Heart right ventricle (tissue), 16 donors: ENCODE measurements at regions of chr7 and their contacts with region 1.

Region 1: GRCh38 chr7:99408379-99409191 is at the starts of genes BUD31 and PDAP1:
- DNase-seq: peak; percentile 93
- ATAC-seq: peak; percentile 93 to 97 (median 96)
- H3K4me3 ChIP-seq: peak within 1 kb of the TSS; percentile 72 to 100 (median 90)
- H3K27ac ChIP-seq: peak within 1 kb of the TSS; percentile 96 to 99 (median 97)
- H3K4me1 ChIP-seq: peaks cover 17 to 55% (median 41%) of the 10 kb centered on the region in 9 donors
- H3K27me3 ChIP-seq: no peaks in the 10 kb centered on the region
- CTCF ChIP-seq: peak in 2 of 9 donors; percentile 5 to 29
- total RNA-seq, gene BUD31: 28.3 to 59.7 (median 40.9) TPM
- total RNA-seq, gene PDAP1: 89.7 to 130 (median 97.6) TPM

Region 2: GRCh38 chr7:99040104-99040958 is 368.3 kb before region 1 on chr7:
- intact Hi-C with region 1: loop called in 1 of 10 experiments (anchors 10 kb)
- DNase-seq: peak; percentile 64 to 91
- ATAC-seq: peak; percentile 76 to 91 (median 85)
- H3K4me3 ChIP-seq: no peak overlapping the region
- H3K27ac ChIP-seq: peak overlapping the region in 6 of 10 donors; percentile 27 to 67 (median 49)
- H3K4me1 ChIP-seq: peaks cover 0 to 42% (median 9%) of the 10 kb centered on the region in 9 donors
- H3K27me3 ChIP-seq: no peaks in the 10 kb centered on the region
- CTCF ChIP-seq: peak; percentile 61 to 85 (median 77)

Region 3: GRCh38 chr7:99312316-99313203 is 96.0 kb before region 1 on chr7:
- intact Hi-C with region 1: no loop called
- DNase-seq: peak; percentile 58 to 62
- ATAC-seq: peak in 7 of 8 donors; percentile 43 to 88 (median 74)
- H3K4me3 ChIP-seq: peak overlapping the region in 1 of 10 donors; percentile 19
- H3K27ac ChIP-seq: no peak overlapping the region
- H3K4me1 ChIP-seq: peaks cover 0 to 9% (median 2%) of the 10 kb centered on the region in 9 donors
- H3K27me3 ChIP-seq: no peaks in the 10 kb centered on the region
- CTCF ChIP-seq: peak; percentile 85 to 92 (median 90)

Region 4: DNA sequence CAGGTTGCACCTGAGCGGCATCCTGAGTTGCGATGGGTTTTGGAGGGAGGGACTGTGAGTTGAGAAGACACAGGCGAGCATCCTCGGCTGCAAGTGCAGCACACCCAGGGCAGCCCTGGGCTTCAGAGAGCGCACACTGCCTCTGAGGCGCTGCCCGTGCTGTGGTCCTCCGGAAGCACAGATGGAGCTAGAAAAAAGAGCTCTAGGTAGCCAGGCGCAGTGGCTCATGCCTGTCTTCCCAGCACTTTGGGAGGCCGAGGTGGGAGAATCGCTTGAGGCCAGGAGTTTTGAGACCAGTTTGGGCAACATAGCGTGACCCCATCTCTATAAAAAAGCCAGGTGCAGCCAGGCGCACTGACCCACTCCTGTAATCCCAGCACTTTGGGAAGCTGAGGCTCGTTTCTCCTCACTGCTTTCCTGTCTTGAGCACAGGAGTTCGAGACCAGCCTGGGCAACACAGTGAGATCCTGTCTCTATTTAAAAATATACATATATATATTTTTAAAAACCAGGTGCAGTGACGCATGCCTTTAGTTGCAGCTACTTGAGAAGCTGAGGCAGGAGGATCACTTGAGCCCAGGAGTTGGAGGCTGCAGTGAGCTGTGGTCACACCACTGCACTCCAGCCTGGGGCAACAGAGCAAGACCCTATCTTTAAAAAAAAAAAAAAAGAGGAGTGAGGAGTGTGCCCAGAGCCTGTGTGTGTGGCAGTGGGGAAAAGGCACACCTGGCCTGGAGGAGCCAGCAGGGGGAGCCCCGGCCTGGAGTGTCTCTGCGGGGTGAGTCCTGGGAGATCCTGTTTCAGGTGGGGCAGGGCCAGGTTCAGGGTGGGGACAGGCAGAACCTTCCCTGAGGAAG is 43.4 kb before region 1 on chr7:
- intact Hi-C with region 1: loop called in 4 of 10 experiments (anchors 5 to 10 kb)
- DNase-seq: peak in 1 of 2 donors; percentile 54
- ATAC-seq: peak in 7 of 8 donors; percentile 37 to 71 (median 62)
- H3K4me3 ChIP-seq: no peak overlapping the region
- H3K27ac ChIP-seq: no peak overlapping the region
- H3K4me1 ChIP-seq: no peaks in the 10 kb centered on the region
- H3K27me3 ChIP-seq: no peaks in the 10 kb centered on the region
- CTCF ChIP-seq: peak; percentile 18 to 65 (median 53)

Region 5: DNA sequence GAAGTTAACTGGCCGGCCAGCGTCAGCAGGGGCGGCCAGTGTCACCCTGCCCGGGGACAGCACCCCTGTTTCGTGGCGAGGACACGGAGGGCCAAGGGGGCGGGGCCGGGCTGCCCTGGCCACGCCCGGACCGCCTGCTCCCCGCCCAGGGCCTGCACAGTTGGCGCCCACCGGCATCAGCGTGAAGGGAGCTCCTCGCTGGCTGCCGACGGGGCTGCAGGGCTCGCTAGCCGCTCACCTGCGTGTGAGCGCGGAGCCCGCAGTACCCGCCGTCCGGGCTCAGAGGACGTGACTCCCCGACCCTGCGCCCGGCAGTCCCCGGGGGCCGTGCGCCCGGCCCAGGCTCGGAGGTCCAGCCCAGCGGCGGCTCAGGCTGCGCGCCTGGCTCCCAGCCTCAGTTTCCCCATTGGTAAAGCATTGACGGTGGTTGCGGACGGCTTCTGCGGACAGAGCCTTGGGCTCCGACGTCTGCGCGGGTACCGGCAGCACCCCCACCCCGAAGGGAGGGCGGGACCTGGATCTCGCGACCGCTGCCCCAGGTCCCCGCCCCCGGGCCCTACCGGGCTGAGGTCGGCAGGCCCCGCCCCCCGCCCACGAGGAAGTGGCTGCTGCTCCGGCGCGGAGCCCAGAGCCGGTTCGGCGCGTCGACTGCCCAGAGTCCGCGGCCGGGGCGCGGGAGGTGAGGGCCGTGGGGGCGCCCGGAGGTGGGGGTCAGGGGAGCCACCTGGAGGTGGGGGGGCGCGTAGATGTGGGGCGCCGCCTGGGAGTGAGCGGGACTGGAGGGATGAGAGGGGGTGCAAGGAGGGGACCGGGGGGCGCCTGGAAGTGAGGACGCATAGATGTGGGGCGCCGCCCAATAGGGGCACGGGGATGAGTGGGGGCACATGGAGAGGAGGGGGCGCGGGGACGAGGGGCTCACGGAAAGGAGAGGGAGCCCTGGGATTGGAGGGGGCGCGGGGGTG is 34.2 kb before region 1 on chr7 and contains the start of gene ARPC1B:
- intact Hi-C with region 1: loop called in 6 of 10 experiments (anchors 1 to 10 kb)
- DNase-seq: peak; percentile 83 to 84
- ATAC-seq: peak; percentile 59 to 86 (median 78)
- H3K4me3 ChIP-seq: peak within 1 kb of the TSS; percentile 75 to 97 (median 90)
- H3K27ac ChIP-seq: peak within 1 kb of the TSS; percentile 91 to 98 (median 97)
- H3K4me1 ChIP-seq: peaks cover 0 to 57% (median 34%) of the 10 kb centered on the region in 9 donors
- H3K27me3 ChIP-seq: no peaks in the 10 kb centered on the region
- CTCF ChIP-seq: no peak
- total RNA-seq, gene ARPC1B: 16.2 to 92.0 (median 19.0) TPM

Region 6: GRCh38 chr7:99525713-99526440 is 117.3 kb after region 1 on chr7:
- intact Hi-C with region 1: no loop called
- DNase-seq: no peak
- ATAC-seq: no peak
- H3K4me3 ChIP-seq: no peak overlapping the region
- H3K27ac ChIP-seq: no peak overlapping the region
- H3K4me1 ChIP-seq: no peaks in the 10 kb centered on the region
- H3K27me3 ChIP-seq: no peaks in the 10 kb centered on the region
- CTCF ChIP-seq: peak in 2 of 9 donors; percentile 25 to 27